IMR-90 (cell line): ENCODE measurements at regions of chr19 and their contacts with region 1.

Region 1: GRCh38 chr19:13162518-13163314 is 12.5 kb downstream of the IER2 start:
- DNase-seq: peak; percentile 97
- ATAC-seq: peak; percentile 76
- H3K4me3 ChIP-seq: peak overlapping the region; percentile 13; the same call in 1 of the 2 replicates
- H3K27ac ChIP-seq: peak overlapping the region; percentile 98
- H3K4me1 ChIP-seq: peaks cover 28% of the 10 kb centered on the region
- H3K27me3 ChIP-seq: no peaks in the 10 kb centered on the region
- CTCF ChIP-seq: no peak
- POLR2A ChIP-seq: no peak; the same call in 1 of the 2 replicates
- RAD21 ChIP-seq: 0 out of 2 replicates have a peak, but pooled peaks have one; percentile 16

Region 2: GRCh38 chr19:13060964-13061927 is 101.5 kb before region 1 on chr19:
- CTCF ChIA-PET with region 1: no interaction called
- POLR2A ChIA-PET with region 1: no interaction called
- dilution Hi-C with region 1: no loop called
- in situ Hi-C with region 1: no loop called
- intact Hi-C with region 1: no loop called
- DNase-seq: peak; percentile 69
- ATAC-seq: peak; percentile 88
- H3K4me3 ChIP-seq: no peak overlapping the region
- H3K27ac ChIP-seq: peak overlapping the region; percentile 8
- H3K4me1 ChIP-seq: peaks cover 42% of the 10 kb centered on the region
- H3K27me3 ChIP-seq: no peaks in the 10 kb centered on the region
- CTCF ChIP-seq: peak; percentile 96
- POLR2A ChIP-seq: no peak
- RAD21 ChIP-seq: peak; percentile 98

Region 3: DNA sequence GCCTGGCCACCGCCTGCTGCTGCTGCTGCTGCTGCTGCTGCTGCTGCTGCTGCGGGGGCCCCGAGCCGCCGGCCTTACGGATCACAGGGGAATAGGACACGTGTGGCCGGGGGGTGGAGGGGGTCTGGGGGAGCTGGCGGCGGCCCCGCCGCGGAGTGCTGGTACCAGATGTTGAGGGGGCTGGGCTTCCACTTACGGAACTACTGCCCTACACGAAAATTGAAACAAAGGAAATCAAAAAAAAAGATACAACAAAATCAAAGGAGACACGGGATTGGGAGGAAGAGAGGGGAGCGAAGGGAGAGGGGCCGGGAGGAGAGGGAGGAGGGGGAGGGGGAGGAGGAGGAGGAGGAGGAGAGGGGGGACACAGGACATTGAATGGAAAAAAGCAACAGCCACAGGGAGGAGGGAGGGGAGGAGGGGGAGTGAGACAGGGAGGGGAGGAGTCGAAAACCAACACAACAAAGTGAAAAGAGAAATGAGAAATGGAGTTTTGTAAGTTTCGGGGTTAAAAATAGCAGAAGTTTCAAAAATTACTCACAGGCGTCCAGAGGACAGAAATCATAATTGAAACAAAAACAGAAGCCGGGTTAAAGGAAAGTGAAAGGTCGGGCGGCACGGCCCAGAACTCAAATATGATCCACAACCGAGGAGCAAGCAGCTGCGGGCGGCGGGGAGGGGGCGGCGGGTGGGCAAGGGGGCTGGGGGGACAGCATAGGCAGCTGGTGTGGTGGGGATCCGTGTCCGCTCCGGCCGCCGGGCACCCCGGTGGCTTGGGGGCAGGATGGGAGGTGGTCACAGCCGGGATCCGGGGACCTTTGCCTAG is 45.3 kb after region 1 on chr19:
- CTCF ChIA-PET with region 1: no interaction called
- POLR2A ChIA-PET with region 1: no interaction called
- dilution Hi-C with region 1: no loop called
- in situ Hi-C with region 1: no loop called
- intact Hi-C with region 1: loop called (anchors 5 kb)
- DNase-seq: peak; percentile 76
- ATAC-seq: peak; percentile 73
- H3K4me3 ChIP-seq: peak overlapping the region; percentile 9; the same call in 1 of the 2 replicates
- H3K27ac ChIP-seq: peak overlapping the region; percentile 75
- H3K4me1 ChIP-seq: peaks cover 7% of the 10 kb centered on the region
- H3K27me3 ChIP-seq: no peaks in the 10 kb centered on the region
- CTCF ChIP-seq: no peak
- POLR2A ChIP-seq: no peak
- RAD21 ChIP-seq: no peak